Activated T-helper 1 cell treated with anti-CD3 and anti-CD28 coated beads, Interleukin-12 subunit alpha, Interleukin-12 subunit beta, Interleukin-2, Interleukin-4 antibody, amounts not matched to agents 30 ng/mL and 10 ng/mL and 1 ng/mL, durations not matched to agents 14 hours and 24 hours and 36 hours (primary cell): ENCODE measurements at regions of chr3 and their contacts with region 1.

Region 1: GRCh38 chr3:9792405-9793160 is at the starts of genes ARPC4 and TADA3:
- DNase-seq: peak; percentile 89
- H3K4me3 Mint-ChIP-seq: peak within 1 kb of the TSS; percentile 99
- H3K27ac Mint-ChIP-seq: peak within 1 kb of the TSS; percentile 100
- H3K4me1 Mint-ChIP-seq: peaks cover 57% of the 10 kb centered on the region
- H3K27me3 Mint-ChIP-seq: no peaks in the 10 kb centered on the region
- total RNA-seq, gene ARPC4: 268 and 273 TPM in 2 replicates
- total RNA-seq, gene TADA3: 63.4 and 63.6 TPM in 2 replicates

Region 2: DNA sequence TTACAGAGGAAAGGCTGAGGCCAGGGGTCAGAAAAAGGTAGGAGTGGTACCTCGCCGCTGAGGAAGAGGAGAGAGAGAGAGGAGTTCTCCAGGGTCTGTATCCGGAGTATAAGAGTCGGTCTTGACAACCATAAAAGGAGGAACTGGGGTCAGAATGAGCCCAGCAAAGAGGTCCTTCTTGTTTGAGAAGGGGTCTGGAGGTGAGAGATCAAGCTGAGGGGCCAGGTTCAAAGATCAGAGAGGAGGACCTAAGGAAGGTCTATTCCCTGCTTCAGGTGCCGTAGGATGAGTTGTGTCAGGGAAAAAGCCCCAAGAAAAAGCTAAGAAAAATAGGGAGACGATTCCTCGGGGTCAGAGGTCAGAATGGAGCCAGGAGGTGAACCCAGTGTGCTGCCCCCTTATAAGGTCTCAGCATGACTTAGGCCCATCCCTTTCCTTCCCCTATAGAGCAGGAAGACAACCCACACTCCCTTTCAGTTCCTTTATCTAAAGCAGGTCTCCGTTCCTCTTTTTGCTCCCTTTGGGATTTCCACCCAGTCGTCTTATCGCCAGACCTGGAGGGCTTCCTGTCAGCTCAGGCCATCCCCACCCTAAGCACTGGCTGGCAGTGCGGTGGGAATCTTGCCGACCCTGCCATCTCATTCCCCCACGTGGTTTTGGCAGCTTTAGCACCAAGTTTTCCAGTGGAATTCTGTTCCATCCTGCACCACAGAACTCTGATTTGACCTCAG is 142.6 kb before region 1 on chr3:
- intact Hi-C with region 1: loop called (anchors 1 kb)
- DNase-seq: no peak
- H3K4me3 Mint-ChIP-seq: peak overlapping the region; percentile 93
- H3K27ac Mint-ChIP-seq: peak overlapping the region; percentile 82
- H3K4me1 Mint-ChIP-seq: peaks cover 13% of the 10 kb centered on the region
- H3K27me3 Mint-ChIP-seq: no peaks in the 10 kb centered on the region

Region 3: DNA sequence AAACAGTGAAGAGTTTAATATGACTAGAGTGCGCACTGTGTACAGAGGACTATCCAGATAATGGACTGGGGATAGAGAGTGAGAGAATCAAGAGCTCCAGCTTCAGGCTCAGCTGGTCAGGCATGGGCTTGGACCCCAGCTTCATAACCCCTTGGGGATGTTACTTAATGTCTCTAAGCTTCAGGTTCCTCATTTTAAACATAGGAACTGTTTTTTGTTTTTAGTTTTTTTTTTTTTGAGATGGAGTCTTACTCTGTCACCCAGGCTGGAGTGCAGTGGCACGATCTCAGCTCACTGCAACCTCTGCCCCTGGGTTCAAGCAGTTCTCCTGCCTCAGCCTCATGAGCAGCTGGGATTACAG is 70.9 kb before region 1 on chr3:
- intact Hi-C with region 1: no loop called
- DNase-seq: no peak
- H3K4me3 Mint-ChIP-seq: no peak overlapping the region
- H3K27ac Mint-ChIP-seq: no peak overlapping the region
- H3K4me1 Mint-ChIP-seq: peaks cover 2% of the 10 kb centered on the region
- H3K27me3 Mint-ChIP-seq: peaks cover 7% of the 10 kb centered on the region

Region 4: DNA sequence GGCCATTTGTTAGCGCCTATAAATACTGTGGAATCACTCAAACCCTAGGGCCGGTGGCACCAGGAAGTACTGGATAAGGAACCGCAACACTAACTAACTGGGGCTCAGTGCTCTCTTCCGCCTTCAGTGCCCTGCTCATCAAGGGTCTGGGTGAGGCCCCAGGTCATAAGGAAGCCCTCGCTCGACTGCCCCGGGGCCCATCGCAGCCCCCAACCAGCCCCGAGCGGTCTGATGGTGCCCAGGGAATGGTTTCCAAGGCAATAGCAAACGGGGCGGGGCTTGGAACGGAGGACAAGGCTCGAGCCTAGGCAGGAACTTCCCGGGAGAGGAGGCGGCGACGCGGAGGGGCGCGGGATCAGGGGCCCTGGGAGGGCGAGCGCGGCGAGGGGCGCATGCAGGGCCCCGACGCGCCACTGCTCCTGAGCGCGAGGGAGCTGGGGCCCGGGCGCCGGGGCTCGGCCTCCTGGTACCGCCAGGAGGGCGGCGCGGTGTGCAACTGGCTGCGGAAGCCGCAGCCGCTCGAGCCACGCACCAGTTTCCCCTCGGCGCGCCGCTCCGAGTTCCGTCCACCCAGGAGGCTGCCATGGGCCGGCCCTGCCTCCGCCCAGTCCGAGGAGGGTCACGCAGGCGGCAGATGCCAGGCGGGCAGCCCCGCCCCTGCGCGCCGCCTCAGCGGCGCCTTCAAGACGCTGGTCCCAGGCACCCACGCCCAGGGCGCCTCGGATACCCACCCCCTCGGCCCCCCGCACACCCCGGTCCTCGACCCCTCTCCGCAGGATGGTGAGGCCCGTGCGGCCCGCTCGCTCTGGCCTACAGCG is 17.2 kb after region 1 on chr3 and contains the start of gene TTLL3:
- intact Hi-C with region 1: loop called (anchors 1 kb)
- DNase-seq: peak; percentile 22
- H3K4me3 Mint-ChIP-seq: peak within 1 kb of the TSS; percentile 86
- H3K27ac Mint-ChIP-seq: peak within 1 kb of the TSS; percentile 93
- H3K4me1 Mint-ChIP-seq: peaks cover 41% of the 10 kb centered on the region
- H3K27me3 Mint-ChIP-seq: no peaks in the 10 kb centered on the region
- total RNA-seq, gene TTLL3: 26.5 and 33.6 TPM in 2 replicates

Region 5: DNA sequence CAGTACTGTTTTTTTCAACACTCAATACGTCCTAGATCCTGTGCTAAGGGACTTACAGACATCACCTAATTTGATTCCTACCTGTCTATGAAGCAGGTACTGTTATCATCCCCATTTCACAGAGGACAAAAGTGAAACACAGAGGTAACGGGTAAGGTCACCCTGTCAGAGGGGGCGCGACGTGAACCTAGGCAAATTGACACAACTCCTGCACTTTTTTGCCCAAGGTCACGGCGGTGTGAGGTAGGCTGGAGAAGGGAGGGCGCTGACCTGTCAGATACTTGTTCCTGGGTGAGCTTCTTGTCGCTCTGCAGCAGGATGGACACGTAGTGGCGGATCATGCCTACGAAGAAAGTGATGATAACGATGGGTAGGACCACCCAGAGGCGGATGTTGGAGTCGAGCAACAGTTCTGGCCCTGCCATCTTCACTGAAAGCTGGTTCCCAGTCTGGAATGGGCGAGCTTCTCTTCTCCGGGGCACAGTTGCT is 193.7 kb after region 1 on chr3:
- intact Hi-C with region 1: loop called (anchors 2 kb)
- DNase-seq: no peak
- H3K4me3 Mint-ChIP-seq: peak overlapping the region; percentile 97
- H3K27ac Mint-ChIP-seq: peak overlapping the region; percentile 98
- H3K4me1 Mint-ChIP-seq: peaks cover 27% of the 10 kb centered on the region
- H3K27me3 Mint-ChIP-seq: no peaks in the 10 kb centered on the region

Region 6: GRCh38 chr3:10248184-10249080 is 455.8 kb after region 1 on chr3 and contains the start of gene TATDN2:
- intact Hi-C with region 1: loop called (anchors 2 kb)
- DNase-seq: peak; percentile 93
- H3K4me3 Mint-ChIP-seq: peak within 1 kb of the TSS; percentile 97
- H3K27ac Mint-ChIP-seq: peak within 1 kb of the TSS; percentile 97
- H3K4me1 Mint-ChIP-seq: peaks cover 62% of the 10 kb centered on the region
- H3K27me3 Mint-ChIP-seq: no peaks in the 10 kb centered on the region
- total RNA-seq, gene TATDN2: 80.4 and 81.5 TPM in 2 replicates